PC-3 (cell line): ENCODE measurements at regions of chr9 and their contacts with region 1.

Region 1: GRCh38 chr9:20622330-20623020 is at the start of gene MLLT3:
- DNase-seq: peak; percentile 88
- ATAC-seq: peak; percentile 70
- H3K4me3 ChIP-seq: peak within 1 kb of the TSS; percentile 87
- H3K27ac ChIP-seq: peak within 1 kb of the TSS; percentile 45
- H3K4me1 ChIP-seq: peaks cover 26% of the 10 kb centered on the region
- H3K27me3 ChIP-seq: no peaks in the 10 kb centered on the region
- CTCF ChIP-seq: no peak
- total RNA-seq, gene MLLT3: 6.4 and 7.1 TPM in 2 replicates

Region 2: GRCh38 chr9:20356403-20357035 is 266.0 kb before region 1 on chr9:
- CTCF ChIA-PET with region 1: no interaction called
- POLR2A ChIA-PET with region 1: no interaction called
- intact Hi-C with region 1: loop called (anchors 1 kb)
- DNase-seq: peak; percentile 75
- ATAC-seq: peak; percentile 89
- H3K4me3 ChIP-seq: peak overlapping the region; percentile 43; the same call in 1 of the 2 replicates
- H3K27ac ChIP-seq: no peak overlapping the region
- H3K4me1 ChIP-seq: peaks cover 21% of the 10 kb centered on the region
- H3K27me3 ChIP-seq: no peaks in the 10 kb centered on the region
- CTCF ChIP-seq: peak; percentile 82

Region 3: GRCh38 chr9:20570756-20571155 is 51.7 kb before region 1 on chr9:
- CTCF ChIA-PET with region 1: no interaction called
- POLR2A ChIA-PET with region 1: no interaction called
- intact Hi-C with region 1: loop called (anchors 1 kb)
- DNase-seq: peak; percentile 58
- ATAC-seq: peak; percentile 65
- H3K4me3 ChIP-seq: 0 out of 2 replicates have a peak overlapping the region, but pooled peaks have one; percentile 16
- H3K27ac ChIP-seq: peak overlapping the region; percentile 57
- H3K4me1 ChIP-seq: peaks cover 29% of the 10 kb centered on the region
- H3K27me3 ChIP-seq: no peaks in the 10 kb centered on the region
- CTCF ChIP-seq: no peak

Region 4: DNA sequence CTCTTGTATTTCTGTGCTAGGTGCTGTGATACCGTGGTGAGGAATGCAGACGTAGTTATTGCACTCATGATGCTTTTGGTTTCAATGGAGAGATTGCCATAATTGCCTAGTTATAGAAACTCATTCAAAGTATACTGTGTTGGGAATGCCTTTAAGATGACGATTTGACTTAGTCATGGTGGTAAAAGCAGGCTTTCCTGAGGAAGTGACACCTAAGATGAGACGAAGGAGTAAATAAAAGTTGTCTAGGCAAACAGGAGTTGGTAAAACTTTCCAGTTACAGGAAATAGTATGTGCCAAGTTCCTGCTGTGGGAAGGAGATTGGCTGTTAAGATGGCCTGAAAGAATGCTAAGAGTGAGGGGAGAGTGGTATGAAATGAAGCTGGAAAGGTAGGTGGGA is 109.6 kb after region 1 on chr9:
- CTCF ChIA-PET with region 1: no interaction called
- POLR2A ChIA-PET with region 1: no interaction called
- intact Hi-C with region 1: loop called (anchors 1 kb)
- DNase-seq: peak; percentile 93
- ATAC-seq: peak; percentile 95
- H3K4me3 ChIP-seq: no peak overlapping the region
- H3K27ac ChIP-seq: peak overlapping the region; percentile 90
- H3K4me1 ChIP-seq: peaks cover 36% of the 10 kb centered on the region
- H3K27me3 ChIP-seq: no peaks in the 10 kb centered on the region
- CTCF ChIP-seq: no peak

Region 5: DNA sequence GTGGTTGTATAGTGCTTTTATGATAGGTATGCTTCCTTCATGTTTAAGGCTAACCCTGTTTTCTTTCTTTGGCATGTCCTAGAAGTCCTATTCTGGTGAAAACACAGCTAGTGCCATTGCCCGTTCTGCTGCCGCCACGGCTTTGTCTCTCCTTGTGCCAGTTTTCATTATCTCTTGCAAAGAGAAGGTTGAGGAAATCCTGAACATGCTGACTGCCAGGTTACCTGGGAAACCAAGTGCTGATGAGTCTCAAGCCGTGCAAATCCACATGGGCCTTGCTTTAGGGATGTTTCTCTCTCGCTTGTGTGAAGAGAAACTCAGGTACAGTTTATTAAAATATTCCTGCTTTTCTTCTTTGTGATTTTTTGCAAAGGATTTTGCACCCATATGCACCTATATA is 306.8 kb after region 1 on chr9:
- CTCF ChIA-PET with region 1: no interaction called
- POLR2A ChIA-PET with region 1: no interaction called
- intact Hi-C with region 1: no loop called
- DNase-seq: no peak
- ATAC-seq: no peak
- H3K4me3 ChIP-seq: no peak overlapping the region
- H3K27ac ChIP-seq: no peak overlapping the region
- H3K4me1 ChIP-seq: no peaks in the 10 kb centered on the region
- H3K27me3 ChIP-seq: no peaks in the 10 kb centered on the region
- CTCF ChIP-seq: no peak

Region 6: GRCh38 chr9:20948703-20949102 is 326.2 kb after region 1 on chr9:
- CTCF ChIA-PET with region 1: interaction called, 13 read pairs
- POLR2A ChIA-PET with region 1: no interaction called
- intact Hi-C with region 1: no loop called
- DNase-seq: no peak
- ATAC-seq: no peak
- H3K4me3 ChIP-seq: no peak overlapping the region
- H3K27ac ChIP-seq: no peak overlapping the region
- H3K4me1 ChIP-seq: peaks cover 6% of the 10 kb centered on the region; the same call in 1 of the 2 replicates
- H3K27me3 ChIP-seq: no peaks in the 10 kb centered on the region
- CTCF ChIP-seq: no peak